Head of caudate nucleus (tissue), 42 donors: ENCODE measurements at regions of chr12 and their contacts with region 1.

Region 1: GRCh38 chr12:55926738-55927587 is 731 bp downstream of the PYM1 start:
- DNase-seq: peak; percentile 77 to 96 (median 90)

Region 2: DNA sequence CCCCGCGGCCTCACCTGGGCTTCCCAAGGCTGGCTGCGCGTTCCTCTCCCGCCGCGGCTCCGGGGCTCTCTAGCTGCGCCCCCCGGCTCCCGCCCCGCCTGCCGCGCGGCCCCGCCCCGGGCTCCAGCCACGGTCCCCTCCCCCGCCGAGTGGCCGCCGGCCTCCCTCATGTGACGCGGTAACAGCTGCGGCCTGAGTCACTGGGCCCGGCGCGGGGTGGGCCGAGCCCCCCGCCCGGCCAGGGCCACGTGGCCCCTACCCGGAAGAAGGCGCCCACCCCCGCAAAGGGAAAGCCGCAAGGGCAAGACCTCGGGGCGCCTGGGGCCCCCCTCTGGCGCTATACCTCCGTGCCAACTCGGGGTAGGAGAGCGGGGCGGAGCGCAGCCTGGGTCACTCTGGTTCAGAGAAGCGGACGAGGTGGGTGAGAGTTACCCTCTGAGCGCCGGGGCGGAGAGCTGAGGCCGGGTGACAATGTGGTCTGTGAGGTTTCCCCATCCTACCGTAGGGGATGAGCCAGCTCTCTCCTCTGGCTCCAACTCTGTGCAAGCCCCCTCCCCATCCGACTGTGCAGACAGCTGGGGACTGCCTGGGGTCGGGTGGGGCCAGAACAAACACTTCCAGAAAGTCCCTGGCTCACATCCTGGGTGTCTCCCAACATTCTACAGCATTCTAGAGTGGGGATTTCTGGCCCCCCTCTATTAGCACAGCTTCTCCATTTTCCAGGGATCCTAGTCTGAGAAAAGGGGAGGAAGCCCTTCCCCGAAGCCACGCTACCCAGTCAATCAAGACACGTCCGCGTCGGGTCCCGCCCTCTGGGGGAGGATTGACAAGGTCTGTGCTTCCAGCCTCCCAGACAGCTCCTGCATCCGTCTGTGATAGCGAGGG is 197.8 kb before region 1 on chr12 and contains the start of gene CD63:
- intact Hi-C with region 1: loop called (anchors 5 kb)
- DNase-seq: peak; percentile 86 to 98 (median 94)

Region 3: DNA sequence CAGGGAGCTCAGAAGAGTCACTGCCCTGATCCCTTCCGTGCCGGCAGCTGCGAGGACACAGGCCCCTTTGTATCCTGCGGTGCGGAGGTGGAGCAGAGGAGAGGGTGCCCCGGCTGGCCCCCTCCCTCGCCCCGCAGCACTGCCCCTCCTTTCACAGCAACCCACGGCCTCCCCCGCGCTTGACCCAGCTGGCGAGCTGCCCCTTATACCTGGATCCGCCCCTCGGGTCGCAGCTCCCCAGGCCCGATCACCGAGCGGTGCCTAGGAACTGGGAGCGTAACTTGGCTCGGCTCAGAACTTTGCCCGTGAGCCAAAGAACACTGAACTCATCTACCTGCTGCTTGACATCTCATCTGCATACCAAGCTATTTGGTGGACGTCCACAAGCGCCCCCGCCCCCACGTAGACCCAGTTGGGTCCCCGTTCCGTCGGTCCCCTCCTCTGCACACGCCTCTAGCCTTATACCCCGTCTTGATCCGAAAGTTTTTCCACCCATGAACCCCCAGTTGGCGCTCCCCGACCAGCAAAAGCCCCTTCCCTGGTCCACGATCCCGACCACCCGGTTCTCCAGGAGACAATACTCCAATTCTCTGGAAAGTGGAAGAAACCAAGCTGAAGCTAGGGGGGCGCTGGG is 96.9 kb before region 1 on chr12:
- intact Hi-C with region 1: loop called (anchors 1 kb)
- DNase-seq: peak in 37 of 42 donors; percentile 42 to 86 (median 73)

Region 4: DNA sequence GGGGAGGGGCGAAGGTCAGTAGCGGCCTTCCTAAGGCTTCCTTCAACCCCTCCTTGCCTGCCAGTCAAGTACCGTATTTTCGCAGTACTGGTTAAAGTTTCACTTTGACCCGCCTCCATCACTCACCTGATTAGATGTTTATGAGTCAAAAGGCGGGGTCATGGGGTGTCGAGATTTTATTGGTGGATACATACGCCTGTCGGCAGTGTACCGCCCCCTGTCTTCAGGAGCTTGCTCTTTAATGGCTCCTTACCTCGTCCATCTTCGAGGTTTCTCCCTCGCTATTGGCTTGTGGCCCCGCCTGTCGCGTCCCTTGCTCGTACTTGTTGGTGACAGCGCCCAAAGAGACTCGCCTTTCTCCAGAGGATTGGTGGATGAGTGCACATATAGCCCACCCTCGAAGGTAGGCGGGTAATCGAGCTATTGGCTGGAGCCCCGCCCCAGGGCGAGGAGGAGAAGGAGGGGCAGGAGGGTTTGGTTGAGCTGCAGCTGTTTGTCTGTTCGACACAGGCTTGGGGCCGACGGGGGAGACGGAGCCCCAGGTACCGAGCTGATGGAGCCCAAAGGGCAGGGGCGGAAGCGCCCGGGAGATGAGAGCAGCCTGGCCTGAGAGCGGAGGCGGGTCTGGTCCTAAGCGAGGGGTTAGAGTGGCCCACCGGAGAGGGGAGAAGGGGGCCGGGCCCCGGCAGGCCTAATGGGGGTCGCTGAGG is 46.8 kb after region 1 on chr12 and contains the start of gene RAB5B:
- intact Hi-C with region 1: loop called (anchors 5 kb)
- DNase-seq: peak; percentile 96 to 100 (median 100)

Region 5: GRCh38 chr12:56071648-56072047 is 144.7 kb after region 1 on chr12:
- intact Hi-C with region 1: no loop called
- DNase-seq: no peak

Region 6: DNA sequence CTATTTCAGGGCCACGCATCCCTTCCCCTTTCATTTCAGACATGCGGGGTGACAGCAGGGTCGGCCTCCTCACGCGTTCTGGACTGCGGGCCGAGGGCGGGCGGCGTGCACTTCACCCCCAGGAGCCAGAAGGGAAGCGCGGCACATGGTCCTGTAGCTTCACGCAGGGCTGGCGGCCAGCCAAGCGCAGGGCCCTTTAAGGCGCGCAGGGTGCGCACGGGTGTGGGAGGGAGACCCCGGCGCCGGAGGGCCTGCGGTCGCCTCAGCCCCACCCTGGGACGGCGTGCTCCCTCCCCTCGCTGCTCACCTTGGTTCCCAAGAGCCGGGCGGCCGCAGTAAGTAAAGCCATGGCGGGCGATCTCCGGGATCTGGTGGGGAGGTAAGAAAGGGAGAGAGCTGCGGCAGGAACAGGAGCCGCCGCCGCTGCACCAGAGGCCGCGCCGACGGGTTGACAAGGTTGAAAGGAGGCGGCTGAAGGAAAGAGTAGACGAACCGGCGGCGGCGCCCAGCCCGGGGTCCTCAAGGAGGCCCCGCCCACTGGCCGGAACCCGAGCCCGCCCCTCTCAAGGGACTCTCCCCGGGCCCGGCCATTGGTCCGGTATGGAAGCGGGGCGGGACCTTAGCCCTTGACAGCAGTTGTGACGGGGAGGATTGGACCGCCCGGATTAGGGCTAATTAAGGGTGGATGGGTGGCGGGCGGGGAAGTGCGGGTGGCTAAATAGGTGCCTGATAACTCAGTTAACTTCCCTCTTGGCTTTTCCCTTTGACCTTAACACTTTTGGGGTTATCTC is 373.1 kb after region 1 on chr12 and contains the start of gene CS:
- intact Hi-C with region 1: no loop called
- DNase-seq: peak; percentile 97 to 100 (median 99)